ENCODE measurements at regions of chr13 and their contacts with region 1.

Region 1: DNA sequence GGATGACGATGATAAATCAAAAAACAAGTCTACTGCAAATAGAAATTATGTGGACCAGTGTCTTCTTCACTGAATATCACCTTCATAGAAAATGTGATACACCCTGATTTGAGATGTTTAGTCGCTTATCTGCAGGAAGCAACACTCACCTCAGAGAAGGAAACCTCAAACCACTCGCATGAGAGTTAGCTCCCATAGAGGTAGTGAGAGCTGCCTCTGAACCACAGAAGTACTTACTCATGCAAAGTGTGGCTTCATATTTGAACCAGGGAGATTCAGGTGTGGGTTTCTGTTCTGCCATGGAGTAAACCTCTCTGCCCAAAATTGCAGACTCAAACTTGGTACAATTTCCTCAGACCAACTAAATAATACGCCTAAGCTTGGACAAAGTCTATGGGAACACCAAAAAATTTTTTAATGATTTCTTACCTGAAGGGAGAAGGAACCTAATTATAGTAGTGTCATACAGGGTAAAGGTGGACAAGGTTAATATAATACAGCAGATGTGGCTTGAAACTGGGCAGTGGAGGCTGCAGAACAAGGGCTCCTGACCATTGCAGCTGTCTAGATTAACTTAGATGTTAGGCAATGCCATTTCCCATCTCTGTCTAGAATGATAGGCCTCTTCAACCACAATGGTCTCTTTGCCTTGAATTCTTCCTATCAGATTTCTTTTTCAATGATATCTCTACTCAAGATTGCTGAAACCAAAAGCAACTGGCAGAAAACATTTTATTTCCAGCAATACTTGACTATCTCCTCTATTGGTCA is 29.6 kb upstream of the RCBTB2 start:
- DNase-seq: peak; percentile 79
- H3K4me3 Mint-ChIP-seq: peak overlapping the region; percentile 31
- H3K27ac Mint-ChIP-seq: peak overlapping the region; percentile 58
- H3K4me1 Mint-ChIP-seq: peaks cover 43% of the 10 kb centered on the region
- H3K27me3 Mint-ChIP-seq: peaks cover 52% of the 10 kb centered on the region

Region 2: GRCh38 chr13:48505597-48506091 is 56.8 kb before region 1 on chr13:
- CTCF ChIA-PET with region 1: no interaction called
- POLR2A ChIA-PET with region 1: no interaction called
- intact Hi-C with region 1: loop called (anchors 1 kb)
- DNase-seq: peak; percentile 61
- H3K4me3 Mint-ChIP-seq: peak overlapping the region; percentile 39
- H3K27ac Mint-ChIP-seq: peak overlapping the region; percentile 68
- H3K4me1 Mint-ChIP-seq: peaks cover 55% of the 10 kb centered on the region
- H3K27me3 Mint-ChIP-seq: no peaks in the 10 kb centered on the region

Region 3: GRCh38 chr13:48532506-48533499 is 29.7 kb before region 1 on chr13 and contains the start of gene RCBTB2:
- CTCF ChIA-PET with region 1: no interaction called
- POLR2A ChIA-PET with region 1: no interaction called
- intact Hi-C with region 1: loop called (anchors 1 kb)
- DNase-seq: peak; percentile 99
- H3K4me3 Mint-ChIP-seq: peak within 1 kb of the TSS; percentile 92
- H3K27ac Mint-ChIP-seq: peak within 1 kb of the TSS; percentile 99
- H3K4me1 Mint-ChIP-seq: peaks cover 28% of the 10 kb centered on the region
- H3K27me3 Mint-ChIP-seq: no peaks in the 10 kb centered on the region
- total RNA-seq, gene RCBTB2: 1.5 to 1.8 TPM

Region 4: GRCh38 chr13:48580185-48580803 is 17.8 kb after region 1 on chr13:
- CTCF ChIA-PET with region 1: interaction called, 10 read pairs
- POLR2A ChIA-PET with region 1: no interaction called
- intact Hi-C with region 1: no loop called
- DNase-seq: peak; percentile 75
- H3K4me3 Mint-ChIP-seq: no peak overlapping the region
- H3K27ac Mint-ChIP-seq: no peak overlapping the region
- H3K4me1 Mint-ChIP-seq: peaks cover 4% of the 10 kb centered on the region
- H3K27me3 Mint-ChIP-seq: peaks cover 7% of the 10 kb centered on the region